ENCODE measurements at regions of chr13 and their contacts with region 1.

Region 1: DNA sequence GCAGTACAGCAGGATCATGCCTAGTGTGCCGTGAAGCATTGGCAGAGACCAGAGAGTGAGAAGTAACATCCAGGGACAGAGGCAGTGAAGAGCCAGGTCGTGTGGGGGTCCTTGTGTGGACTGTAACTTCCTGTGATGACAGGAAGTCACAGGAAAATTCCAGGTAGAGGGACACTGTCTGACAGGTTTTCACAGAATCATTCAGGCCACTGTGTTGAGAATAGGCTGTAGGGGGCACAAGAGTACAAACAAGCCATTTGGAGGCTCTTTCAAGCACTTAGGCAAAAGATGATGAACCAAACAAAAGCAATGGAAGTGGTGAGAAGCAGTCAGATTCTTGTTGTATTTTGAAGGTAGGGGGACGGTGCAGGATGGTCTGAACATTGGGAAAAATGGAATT is 46.4 kb downstream of the N4BP2L1 start:
- DNase-seq: peak; percentile 11
- H3K4me3 Mint-ChIP-seq: no peak overlapping the region
- H3K27ac Mint-ChIP-seq: no peak overlapping the region
- H3K4me1 Mint-ChIP-seq: no peaks in the 10 kb centered on the region
- H3K27me3 Mint-ChIP-seq: no peaks in the 10 kb centered on the region

Region 2: DNA sequence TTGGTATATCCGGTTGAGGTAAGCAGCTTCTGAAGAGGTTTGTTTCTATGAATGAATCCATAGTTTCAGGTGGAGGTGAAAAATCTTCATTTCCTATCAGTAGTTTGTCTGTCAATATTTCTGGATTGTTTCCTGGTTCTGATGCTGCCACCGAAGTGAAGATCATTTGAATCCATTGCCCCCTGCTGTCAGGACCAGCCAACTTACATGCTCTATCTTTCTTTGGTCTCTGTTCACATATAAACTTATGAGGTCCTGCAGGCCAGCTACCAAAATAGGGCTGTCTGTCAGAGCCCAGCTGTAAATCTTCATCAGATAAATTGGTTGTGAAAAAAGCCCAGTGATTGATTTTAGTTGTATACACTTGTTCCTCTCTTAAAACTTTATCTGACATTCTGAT is 61.6 kb after region 1 on chr13:
- CTCF ChIA-PET with region 1: interaction called, 4 read pairs
- POLR2A ChIA-PET with region 1: no interaction called
- intact Hi-C with region 1: loop called (anchors 1 kb)
- DNase-seq: peak; percentile 51
- H3K4me3 Mint-ChIP-seq: no peak overlapping the region
- H3K27ac Mint-ChIP-seq: no peak overlapping the region
- H3K4me1 Mint-ChIP-seq: peaks cover 9% of the 10 kb centered on the region
- H3K27me3 Mint-ChIP-seq: no peaks in the 10 kb centered on the region

Region 3: GRCh38 chr13:32530841-32531253 is 149.3 kb after region 1 on chr13:
- CTCF ChIA-PET with region 1: no interaction called
- POLR2A ChIA-PET with region 1: no interaction called
- intact Hi-C with region 1: no loop called
- DNase-seq: no peak
- H3K4me3 Mint-ChIP-seq: peak overlapping the region; percentile 71
- H3K27ac Mint-ChIP-seq: peak overlapping the region; percentile 87
- H3K4me1 Mint-ChIP-seq: peaks cover 81% of the 10 kb centered on the region
- H3K27me3 Mint-ChIP-seq: no peaks in the 10 kb centered on the region